ENCODE measurements at regions of chr1 and their contacts with region 1.

Region 1: DNA sequence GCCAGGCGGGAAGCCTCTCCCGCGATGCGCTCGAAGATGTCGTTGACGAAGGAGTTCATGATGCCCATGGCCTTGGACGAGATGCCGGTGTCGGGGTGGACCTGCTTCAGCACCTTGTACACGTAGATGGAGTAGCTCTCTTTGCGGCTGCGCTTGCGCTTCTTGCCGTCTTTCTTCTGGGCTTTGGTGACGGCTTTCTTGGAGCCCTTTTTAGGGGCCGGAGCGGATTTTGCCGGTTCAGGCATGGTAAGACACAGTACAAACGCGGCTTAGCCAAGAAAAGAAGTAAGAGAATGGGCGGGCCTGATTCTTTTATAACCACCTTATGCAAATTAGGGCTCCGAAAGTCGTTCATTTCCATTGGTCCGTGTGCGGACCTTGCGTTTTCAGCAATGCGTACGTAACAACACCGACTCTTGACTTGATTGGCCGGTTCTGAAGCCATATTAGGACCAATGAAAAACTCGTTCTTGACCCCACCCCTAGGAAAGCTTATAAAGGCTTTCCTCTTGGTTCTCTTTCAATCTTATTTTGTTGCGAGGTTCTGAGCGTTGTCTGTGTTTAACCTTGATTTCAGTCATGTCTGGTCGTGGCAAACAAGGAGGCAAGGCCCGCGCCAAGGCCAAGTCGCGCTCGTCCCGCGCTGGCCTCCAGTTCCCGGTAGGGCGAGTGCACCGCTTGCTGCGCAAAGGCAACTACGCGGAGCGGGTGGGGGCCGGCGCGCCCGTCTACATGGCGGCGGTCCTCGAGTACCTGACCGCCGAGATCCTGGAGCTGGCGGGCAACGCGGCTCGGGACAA is 12.8 kb upstream of the BOLA1 start:
- DNase-seq: peak; percentile 67 to 95 (median 93)
- H3K4me3 ChIP-seq: peak overlapping the region; percentile 76
- H3K4me3 Mint-ChIP-seq: no peak overlapping the region
- H3K27ac ChIP-seq: peak overlapping the region; percentile 94
- H3K27ac Mint-ChIP-seq: no peak overlapping the region
- H3K4me1 ChIP-seq: peaks cover 35% of the 10 kb centered on the region
- H3K4me1 Mint-ChIP-seq: peaks cover 8 to 15% (median 12%) of the 10 kb centered on the region in 3 donors
- H3K27me3 ChIP-seq: no peaks in the 10 kb centered on the region
- H3K27me3 Mint-ChIP-seq: no peaks in the 10 kb centered on the region

Region 2: GRCh38 chr1:149899460-149900293 is 13.1 kb after region 1 on chr1 and contains the start of gene BOLA1:
- CTCF ChIA-PET with region 1: interaction called, 7 read pairs
- POLR2A ChIA-PET with region 1: interaction called, 31 read pairs
- DNase-seq: peak; percentile 71 to 87 (median 74)
- H3K4me3 ChIP-seq: peak within 1 kb of the TSS; percentile 91
- H3K4me3 Mint-ChIP-seq: peak within 1 kb of the TSS; percentile 89 to 97 (median 93)
- H3K27ac ChIP-seq: peak within 1 kb of the TSS; percentile 73
- H3K27ac Mint-ChIP-seq: peak within 1 kb of the TSS; percentile 78 to 97 (median 94)
- H3K4me1 ChIP-seq: peaks cover 7% of the 10 kb centered on the region
- H3K4me1 Mint-ChIP-seq: peaks cover 18 to 20% (median 20%) of the 10 kb centered on the region in 3 donors
- H3K27me3 ChIP-seq: no peaks in the 10 kb centered on the region
- H3K27me3 Mint-ChIP-seq: peaks cover 0 to 2% of the 10 kb centered on the region in 2 donors
- total RNA-seq, gene BOLA1: 27.3 to 28.4 TPM

Region 3: DNA sequence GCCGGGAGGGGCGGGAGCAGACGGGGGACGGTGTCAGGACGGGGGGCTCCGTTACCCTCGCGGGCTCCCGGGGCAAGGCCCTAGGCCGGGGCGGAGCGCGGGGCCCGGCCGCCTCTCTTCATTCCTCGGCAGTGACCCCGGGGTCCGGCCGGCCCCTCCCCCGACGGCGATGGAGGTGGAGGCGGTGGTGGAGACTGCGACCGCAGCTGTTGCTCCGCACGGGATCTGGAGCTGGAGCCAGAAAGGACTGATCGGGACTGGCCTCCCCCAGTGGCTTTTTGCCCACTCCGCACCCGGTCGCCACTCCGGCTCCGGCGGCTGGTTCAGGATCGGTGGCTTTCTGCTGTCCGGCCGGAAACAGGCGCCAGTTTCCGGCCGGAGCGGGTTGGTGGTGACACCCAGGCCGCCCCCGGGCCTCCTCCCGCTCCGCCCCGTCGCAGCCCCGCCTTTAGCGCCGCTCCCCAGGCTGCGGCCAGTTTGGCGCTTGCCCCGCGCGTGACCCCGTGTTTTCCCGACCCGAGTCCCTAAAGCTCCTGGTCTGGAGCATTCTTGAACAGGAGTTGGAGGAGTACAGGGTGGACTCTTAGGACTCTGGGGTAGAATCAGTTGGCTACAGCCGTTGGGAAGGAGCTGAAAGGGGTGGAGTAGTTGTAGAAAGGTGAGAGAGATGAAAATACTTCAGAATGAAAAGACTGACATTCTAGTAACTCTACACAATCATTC is 124.0 kb after region 1 on chr1 and contains the start of gene OTUD7B:
- CTCF ChIA-PET with region 1: interaction called, 4 read pairs
- POLR2A ChIA-PET with region 1: interaction called, 14 read pairs
- DNase-seq: peak; percentile 40 to 74 (median 54)
- H3K4me3 ChIP-seq: peak within 1 kb of the TSS; percentile 91
- H3K4me3 Mint-ChIP-seq: peak within 1 kb of the TSS; percentile 93 to 99 (median 96)
- H3K27ac ChIP-seq: peak within 1 kb of the TSS; percentile 79
- H3K27ac Mint-ChIP-seq: peak within 1 kb of the TSS; percentile 80 to 98 (median 94)
- H3K4me1 ChIP-seq: peaks cover 27% of the 10 kb centered on the region
- H3K4me1 Mint-ChIP-seq: peaks cover 32 to 44% (median 40%) of the 10 kb centered on the region in 3 donors
- H3K27me3 ChIP-seq: no peaks in the 10 kb centered on the region
- H3K27me3 Mint-ChIP-seq: no peaks in the 10 kb centered on the region
- total RNA-seq, gene OTUD7B: 39.7 to 41.0 TPM

Region 4: GRCh38 chr1:150021191-150021694 is 134.6 kb after region 1 on chr1:
- CTCF ChIA-PET with region 1: no interaction called
- POLR2A ChIA-PET with region 1: no interaction called
- DNase-seq: no peak
- H3K4me3 ChIP-seq: no peak overlapping the region
- H3K4me3 Mint-ChIP-seq: no peak overlapping the region
- H3K27ac ChIP-seq: no peak overlapping the region
- H3K27ac Mint-ChIP-seq: peak overlapping the region in 1 of 8 donors; percentile 29
- H3K4me1 ChIP-seq: no peaks in the 10 kb centered on the region
- H3K4me1 Mint-ChIP-seq: no peaks in the 10 kb centered on the region
- H3K27me3 ChIP-seq: no peaks in the 10 kb centered on the region
- H3K27me3 Mint-ChIP-seq: peaks cover 4 to 23% of the 10 kb centered on the region in 2 donors

Region 5: DNA sequence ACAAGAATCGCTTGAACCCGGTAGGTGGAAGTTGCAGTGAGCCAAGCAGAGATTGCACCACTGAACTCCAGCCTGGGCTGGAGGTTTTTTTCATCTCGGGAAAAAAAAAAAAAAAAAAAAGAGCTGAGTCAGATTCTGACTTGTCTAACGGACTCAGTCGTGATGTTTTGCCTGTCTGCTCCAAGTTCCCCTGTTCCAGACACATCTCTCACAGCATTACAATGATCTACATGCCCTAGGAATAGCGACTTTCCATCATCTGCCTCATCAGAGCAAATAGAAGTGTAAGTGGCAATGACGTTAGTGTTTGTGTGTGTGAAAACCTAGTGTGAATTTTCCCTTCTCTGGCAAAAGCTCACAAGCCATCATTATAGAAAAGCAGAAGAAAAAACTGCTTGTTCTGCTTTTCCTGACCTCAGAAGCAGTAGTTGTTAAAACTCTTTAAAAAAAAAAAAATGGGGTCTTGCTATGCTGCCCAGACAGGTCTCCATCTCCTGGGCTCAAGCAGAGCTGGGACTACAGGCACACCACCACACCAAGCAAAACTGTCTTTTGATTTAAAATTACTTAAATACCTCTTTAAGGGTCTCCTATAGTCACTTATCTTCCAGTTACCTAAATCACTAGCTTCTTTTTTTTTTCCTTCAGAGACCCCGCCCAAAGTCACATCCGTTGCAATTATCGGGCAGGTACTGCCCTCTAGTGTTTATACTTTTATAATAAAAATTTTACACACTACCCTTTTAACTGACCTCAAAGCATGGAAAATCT is 300.4 kb after region 1 on chr1:
- CTCF ChIA-PET with region 1: interaction called, 11 read pairs
- POLR2A ChIA-PET with region 1: interaction called, 14 read pairs
- DNase-seq: peak in 2 of 5 donors; percentile 45 to 59
- H3K4me3 ChIP-seq: no peak overlapping the region
- H3K4me3 Mint-ChIP-seq: peak overlapping the region in 5 of 7 donors; percentile 4 to 62 (median 33)
- H3K27ac ChIP-seq: no peak overlapping the region
- H3K27ac Mint-ChIP-seq: peak overlapping the region in 6 of 8 donors; percentile 35 to 72 (median 62)
- H3K4me1 ChIP-seq: no peaks in the 10 kb centered on the region
- H3K4me1 Mint-ChIP-seq: peaks cover 7 to 13% (median 10%) of the 10 kb centered on the region in 3 donors
- H3K27me3 ChIP-seq: no peaks in the 10 kb centered on the region
- H3K27me3 Mint-ChIP-seq: peaks cover 0 to 6% of the 10 kb centered on the region in 2 donors

Measured in CD8-positive, alpha-beta memory T cell (primary cell).